Dendritic cell treated with granulocyte-macrophage colony-stimulating factor and Interleukin-4, amounts not matched to agents 40 ng/mL and 50 ng/mL, for 4 days (primary cell): ENCODE measurements at regions of chr6 and their contacts with region 1.

Region 1: DNA sequence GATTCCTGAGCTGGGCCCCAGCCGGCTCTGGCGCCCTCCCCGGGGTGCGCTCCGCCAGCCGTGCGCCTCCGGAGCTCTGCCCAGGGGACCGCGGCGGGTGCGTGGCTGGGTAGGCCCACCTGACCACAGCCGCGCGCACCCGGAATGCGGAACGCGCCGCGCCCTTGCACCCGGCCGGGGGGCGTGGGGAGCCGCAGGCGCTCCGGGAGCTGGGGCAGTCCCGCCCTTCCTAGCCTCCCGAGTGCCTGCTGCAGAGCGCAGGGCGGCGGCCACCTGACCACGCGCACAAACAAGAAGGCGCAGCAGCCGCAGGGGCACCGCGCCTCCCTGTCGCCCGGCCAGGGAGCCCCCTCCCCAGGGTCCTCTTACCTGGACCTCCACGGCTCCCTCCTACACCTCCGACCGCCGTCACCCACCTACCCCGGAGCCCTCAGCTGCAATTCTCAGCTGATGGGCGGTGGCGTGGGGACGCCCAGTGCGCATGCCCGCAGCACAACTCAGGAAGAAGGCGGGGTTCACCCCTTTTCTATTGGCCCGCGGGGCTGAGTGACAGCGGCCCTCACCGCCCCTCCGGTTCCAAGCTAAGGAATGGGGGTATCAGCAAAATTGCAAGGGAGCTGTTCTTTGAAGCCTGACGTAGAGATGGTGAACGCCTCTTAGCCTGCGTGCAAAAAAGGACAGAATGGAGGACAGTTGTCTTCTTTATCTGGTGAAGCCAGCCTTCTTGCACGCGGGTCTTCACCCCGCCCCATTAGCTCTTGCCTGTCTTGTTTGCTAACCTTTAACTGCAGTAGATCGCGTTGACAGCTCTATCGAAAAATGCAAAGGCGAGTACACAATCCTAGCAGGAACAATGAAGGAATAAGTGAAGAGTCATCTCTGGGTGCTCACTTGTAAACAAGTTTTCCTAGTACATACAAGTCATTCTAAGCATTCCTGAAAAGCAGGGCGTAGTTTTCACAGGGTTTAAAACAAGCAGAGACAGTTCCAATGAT is at the start of gene STX7:
- H3K4me3 Mint-ChIP-seq: peak within 1 kb of the TSS; percentile 94
- H3K27ac Mint-ChIP-seq: peak within 1 kb of the TSS; percentile 94
- H3K4me1 Mint-ChIP-seq: peaks cover 48% of the 10 kb centered on the region
- H3K27me3 Mint-ChIP-seq: peaks cover 2% of the 10 kb centered on the region

Region 2: GRCh38 chr6:131555992-131556391 is 956.9 kb before region 1 on chr6:
- intact Hi-C with region 1: no loop called
- H3K4me3 Mint-ChIP-seq: no peak overlapping the region
- H3K27ac Mint-ChIP-seq: no peak overlapping the region
- H3K4me1 Mint-ChIP-seq: no peaks in the 10 kb centered on the region
- H3K27me3 Mint-ChIP-seq: no peaks in the 10 kb centered on the region

Region 3: GRCh38 chr6:132490024-132490423 is 22.9 kb before region 1 on chr6:
- intact Hi-C with region 1: loop called (anchors 2 kb)
- H3K4me3 Mint-ChIP-seq: no peak overlapping the region
- H3K27ac Mint-ChIP-seq: no peak overlapping the region
- H3K4me1 Mint-ChIP-seq: peaks cover 22% of the 10 kb centered on the region
- H3K27me3 Mint-ChIP-seq: no peaks in the 10 kb centered on the region

Region 4: DNA sequence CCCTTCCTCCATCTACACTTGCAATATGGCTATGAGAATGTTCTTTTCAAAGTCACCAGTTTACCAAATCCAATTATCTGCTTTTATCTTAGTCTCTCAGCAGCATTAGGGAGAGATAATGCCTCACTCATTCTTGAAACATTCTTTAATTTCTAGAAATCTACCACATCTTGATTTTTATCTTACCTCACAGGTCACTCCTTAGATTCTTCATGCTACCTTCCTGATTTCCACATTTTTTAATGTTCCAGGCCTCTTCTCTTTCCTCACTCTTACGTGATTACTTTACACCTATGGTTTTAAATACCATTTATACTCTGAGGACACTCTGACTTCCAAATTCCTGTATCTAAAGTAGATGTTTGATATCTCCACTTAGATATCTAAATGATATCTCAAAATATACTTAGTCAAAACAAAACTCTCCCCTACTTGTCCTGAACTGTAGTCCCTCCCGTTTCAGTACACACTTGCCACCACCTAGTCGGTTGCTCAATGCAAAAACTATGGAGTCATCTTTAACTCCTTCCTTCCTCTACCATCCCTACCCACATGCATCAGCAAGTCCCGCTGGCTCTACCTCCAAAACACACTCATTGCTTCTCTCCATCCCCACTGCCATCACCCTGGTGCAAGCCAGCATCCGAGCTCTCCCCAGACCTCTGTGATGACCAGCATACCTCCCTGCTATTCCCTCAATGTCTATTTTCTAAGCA is 13.3 kb before region 1 on chr6:
- intact Hi-C with region 1: loop called (anchors 1 kb)
- H3K4me3 Mint-ChIP-seq: peak overlapping the region; percentile 37
- H3K27ac Mint-ChIP-seq: peak overlapping the region; percentile 39
- H3K4me1 Mint-ChIP-seq: peaks cover 55% of the 10 kb centered on the region
- H3K27me3 Mint-ChIP-seq: no peaks in the 10 kb centered on the region

Region 5: GRCh38 chr6:132569170-132569569 is 56.2 kb after region 1 on chr6:
- intact Hi-C with region 1: no loop called
- H3K4me3 Mint-ChIP-seq: no peak overlapping the region
- H3K27ac Mint-ChIP-seq: no peak overlapping the region
- H3K4me1 Mint-ChIP-seq: peaks cover 9% of the 10 kb centered on the region
- H3K27me3 Mint-ChIP-seq: peaks cover 9% of the 10 kb centered on the region

Region 6: GRCh38 chr6:132813173-132813856 is 300.4 kb after region 1 on chr6:
- intact Hi-C with region 1: loop called (anchors 1 kb)
- H3K4me3 Mint-ChIP-seq: peak overlapping the region; percentile 97
- H3K27ac Mint-ChIP-seq: peak overlapping the region; percentile 99
- H3K4me1 Mint-ChIP-seq: peaks cover 39% of the 10 kb centered on the region
- H3K27me3 Mint-ChIP-seq: peaks cover 10% of the 10 kb centered on the region